ENCODE measurements at regions of chr2 and their contacts with region 1.

Region 1: GRCh38 chr2:64767670-64768468 is 114.2 kb upstream of the SERTAD2 start:
- DNase-seq: peak; percentile 88 to 89
- ATAC-seq: peak; percentile 98
- H3K4me3 ChIP-seq: peak overlapping the region; percentile 77 to 91 (median 84)
- H3K27ac ChIP-seq: peak overlapping the region; percentile 93 to 99 (median 97)
- H3K4me1 ChIP-seq: peaks cover 4 to 13% of the 10 kb centered on the region in 2 donors
- H3K27me3 ChIP-seq: no peaks in the 10 kb centered on the region
- CTCF ChIP-seq: peak in 1 of 5 experiments; percentile 10
- POLR2A ChIP-seq: peak; percentile 89 to 90

Region 2: GRCh38 chr2:64831134-64831976 is 63.5 kb after region 1 on chr2:
- in situ Hi-C with region 1: no loop called
- intact Hi-C with region 1: loop called (anchors 5 kb)
- DNase-seq: peak; percentile 40 to 80
- ATAC-seq: peak; percentile 81 to 89
- H3K4me3 ChIP-seq: no peak overlapping the region
- H3K27ac ChIP-seq: peak overlapping the region; percentile 42 to 74 (median 62)
- H3K4me1 ChIP-seq: peaks cover 4 to 6% of the 10 kb centered on the region in 2 donors
- H3K27me3 ChIP-seq: no peaks in the 10 kb centered on the region
- CTCF ChIP-seq: peak; percentile 73 to 86 (median 77)
- POLR2A ChIP-seq: no peak

Measured in gastrocnemius medialis (tissue), 4 donors.